ENCODE measurements at regions of chr4 and their contacts with region 1.

Region 1: GRCh38 chr4:10018818-10019461 is 2.4 kb downstream of the SLC2A9 start:
- DNase-seq: peak; percentile 99
- H3K4me3 ChIP-seq: peak overlapping the region in 2 of 4 donors; percentile 43 to 47
- H3K27ac ChIP-seq: peak overlapping the region; percentile 47 to 95 (median 87)
- H3K4me1 ChIP-seq: peaks cover 12 to 17% of the 10 kb centered on the region in 2 donors
- H3K27me3 ChIP-seq: no peaks in the 10 kb centered on the region
- CTCF ChIP-seq: peak; percentile 97 to 100 (median 100)
- POLR2A ChIP-seq: peak; percentile 53 to 73

Region 2: DNA sequence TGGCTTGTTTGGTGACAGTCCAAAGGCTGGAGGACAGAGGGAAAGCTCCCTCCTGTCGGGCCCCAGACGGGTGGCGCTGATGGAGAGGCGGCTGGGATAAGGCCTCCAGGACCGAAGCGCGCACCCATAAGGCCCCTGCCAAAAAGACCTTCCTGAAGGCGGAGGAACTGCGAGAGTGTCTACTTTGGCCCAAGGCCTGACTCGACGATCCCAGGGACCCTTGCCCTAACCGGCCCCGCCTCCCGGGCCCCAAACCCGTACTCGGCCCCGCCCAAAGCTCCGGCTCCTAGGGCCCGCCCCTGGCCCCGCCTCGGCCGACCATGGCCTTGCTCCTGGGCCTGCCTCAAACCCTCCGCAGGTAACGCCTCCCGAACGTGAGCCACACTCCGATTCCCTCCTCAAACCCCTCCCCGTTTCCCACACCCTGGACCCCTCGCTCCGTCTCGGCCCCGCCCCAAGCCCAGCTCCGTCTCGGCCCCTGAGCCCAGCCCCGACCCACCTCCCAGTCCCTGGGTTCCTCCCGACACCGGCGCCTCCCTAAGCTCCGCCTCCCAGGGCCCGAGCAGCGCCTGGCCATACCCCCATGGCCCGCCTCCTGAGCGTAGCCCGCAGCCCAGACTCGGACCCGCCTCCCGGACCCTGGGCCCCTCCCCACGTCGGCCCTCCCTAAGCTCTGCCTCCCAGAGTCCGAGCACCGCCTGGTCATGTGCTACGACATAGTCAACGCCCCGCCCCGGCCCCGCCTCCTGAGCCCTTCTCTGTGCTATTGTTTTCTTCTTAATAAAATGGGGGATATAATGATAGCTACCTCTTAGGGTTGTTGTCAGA is 327.5 kb before region 1 on chr4:
- intact Hi-C with region 1: loop called in 1 of 2 experiments (anchors 10 kb)
- DNase-seq: peak; percentile 96 to 98 (median 97)
- H3K4me3 ChIP-seq: peak overlapping the region in 2 of 4 donors; percentile 32 to 64
- H3K27ac ChIP-seq: peak overlapping the region in 3 of 5 donors; percentile 56 to 81 (median 63)
- H3K4me1 ChIP-seq: no peaks in the 10 kb centered on the region
- H3K27me3 ChIP-seq: no peaks in the 10 kb centered on the region
- CTCF ChIP-seq: no peak
- POLR2A ChIP-seq: peak in 1 of 2 donors; percentile 32

Region 3: GRCh38 chr4:9762823-9763475 is 256.0 kb before region 1 on chr4:
- intact Hi-C with region 1: loop called (anchors 2 to 5 kb)
- DNase-seq: peak; percentile 65 to 84 (median 74)
- H3K4me3 ChIP-seq: no peak overlapping the region
- H3K27ac ChIP-seq: no peak overlapping the region
- H3K4me1 ChIP-seq: no peaks in the 10 kb centered on the region
- H3K27me3 ChIP-seq: no peaks in the 10 kb centered on the region
- CTCF ChIP-seq: peak; percentile 44 to 86 (median 76)
- POLR2A ChIP-seq: no peak

Region 4: GRCh38 chr4:9835430-9835829 is 183.5 kb before region 1 on chr4:
- intact Hi-C with region 1: no loop called
- DNase-seq: peak; percentile 60 to 83 (median 68)
- H3K4me3 ChIP-seq: no peak overlapping the region
- H3K27ac ChIP-seq: no peak overlapping the region
- H3K4me1 ChIP-seq: peaks cover 7% of the 10 kb centered on the region in 2 donors
- H3K27me3 ChIP-seq: no peaks in the 10 kb centered on the region
- CTCF ChIP-seq: no peak
- POLR2A ChIP-seq: no peak

Region 5: GRCh38 chr4:9898596-9899305 is 120.2 kb before region 1 on chr4:
- intact Hi-C with region 1: loop called (anchors 10 kb)
- DNase-seq: peak; percentile 58 to 84 (median 72)
- H3K4me3 ChIP-seq: no peak overlapping the region
- H3K27ac ChIP-seq: no peak overlapping the region
- H3K4me1 ChIP-seq: no peaks in the 10 kb centered on the region
- H3K27me3 ChIP-seq: no peaks in the 10 kb centered on the region
- CTCF ChIP-seq: peak in 5 of 6 experiments; percentile 29 to 54 (median 47)
- POLR2A ChIP-seq: no peak

Region 6: DNA sequence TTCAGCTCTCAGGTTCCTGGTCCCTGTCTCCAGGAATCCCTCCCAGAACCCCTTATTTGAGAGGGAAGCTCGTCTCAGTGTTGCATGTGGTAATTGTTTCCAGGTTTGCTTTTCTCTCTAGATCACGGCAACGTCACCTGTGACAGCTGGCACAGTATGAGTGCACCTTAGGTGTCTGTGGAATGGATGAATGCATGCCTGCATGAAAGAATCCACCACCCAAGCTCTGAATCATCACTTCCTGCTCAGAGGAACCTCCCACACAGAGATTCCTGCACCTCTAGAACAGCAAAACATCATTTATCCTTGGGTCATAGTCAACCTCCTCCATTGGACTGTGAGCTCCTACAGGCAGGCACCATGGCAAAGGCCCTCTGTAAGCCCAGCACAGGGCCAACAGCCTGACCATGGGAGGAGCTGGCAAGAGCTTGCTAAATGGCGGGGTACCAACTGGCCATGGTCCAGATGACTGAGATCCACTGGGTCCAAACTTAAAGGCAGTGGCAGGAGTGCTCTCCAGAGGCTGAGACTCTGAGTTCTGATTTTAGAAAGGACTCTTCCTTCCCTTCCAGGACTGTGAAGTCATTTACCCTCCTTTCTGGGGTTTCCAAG is 113.9 kb before region 1 on chr4:
- intact Hi-C with region 1: loop called in 1 of 2 experiments (anchors 10 kb)
- DNase-seq: peak in 6 of 7 donors; percentile 36 to 68 (median 58)
- H3K4me3 ChIP-seq: no peak overlapping the region
- H3K27ac ChIP-seq: no peak overlapping the region
- H3K4me1 ChIP-seq: peaks cover 0 to 6% of the 10 kb centered on the region in 2 donors
- H3K27me3 ChIP-seq: no peaks in the 10 kb centered on the region
- CTCF ChIP-seq: no peak
- POLR2A ChIP-seq: no peak

Region 7: GRCh38 chr4:10063544-10064300 is 44.8 kb after region 1 on chr4:
- intact Hi-C with region 1: loop called (anchors 5 kb)
- DNase-seq: peak; percentile 77 to 93 (median 88)
- H3K4me3 ChIP-seq: no peak overlapping the region
- H3K27ac ChIP-seq: peak overlapping the region in 2 of 5 donors; percentile 53 to 67
- H3K4me1 ChIP-seq: peaks cover 0 to 14% of the 10 kb centered on the region in 2 donors
- H3K27me3 ChIP-seq: no peaks in the 10 kb centered on the region
- CTCF ChIP-seq: peak; percentile 52 to 98 (median 93)
- POLR2A ChIP-seq: no peak

Region 8: DNA sequence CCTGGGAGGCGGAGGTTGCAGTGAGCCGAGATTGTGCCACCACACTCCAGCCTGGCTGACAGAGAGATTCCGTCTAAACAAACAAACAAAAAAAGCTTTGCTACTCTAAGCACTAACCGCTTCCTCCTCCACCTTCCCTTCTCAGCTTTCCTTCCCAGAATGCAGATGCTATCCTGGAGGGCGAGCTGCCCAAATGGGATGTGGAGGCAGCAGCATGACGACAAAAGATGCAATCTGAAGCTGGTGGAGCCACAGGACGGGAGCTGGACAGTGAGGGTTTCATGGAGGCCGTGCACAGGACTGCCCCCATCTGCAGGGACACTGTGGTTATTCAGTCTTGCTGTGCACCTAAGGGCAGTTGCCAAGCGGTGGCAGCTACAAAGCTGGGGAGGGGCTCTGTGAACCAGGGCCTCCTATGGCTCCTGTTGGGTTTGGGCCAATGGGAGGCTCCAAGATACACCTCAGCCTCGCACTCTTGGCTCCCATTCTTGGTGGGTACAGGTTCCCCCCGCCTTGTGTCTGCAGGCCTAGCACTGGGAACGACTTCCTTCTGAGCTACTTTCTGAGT is 50.2 kb after region 1 on chr4:
- intact Hi-C with region 1: loop called (anchors 5 kb)
- DNase-seq: no peak
- H3K4me3 ChIP-seq: no peak overlapping the region
- H3K27ac ChIP-seq: no peak overlapping the region
- H3K4me1 ChIP-seq: no peaks in the 10 kb centered on the region
- H3K27me3 ChIP-seq: no peaks in the 10 kb centered on the region
- CTCF ChIP-seq: no peak
- POLR2A ChIP-seq: no peak